Activated CD4-positive, alpha-beta T cell treated with anti-CD3 and anti-CD28 coated beads for 36 hours (primary cell): ENCODE measurements at regions of chr20 and their contacts with region 1.

Region 1: GRCh38 chr20:62386383-62387218 is at the start of gene RPS21:
- DNase-seq: peak; percentile 97
- ATAC-seq: peak; percentile 91
- H3K4me3 Mint-ChIP-seq: peak within 1 kb of the TSS; percentile 93
- H3K27ac Mint-ChIP-seq: peak within 1 kb of the TSS; percentile 94
- H3K4me1 Mint-ChIP-seq: peaks cover 42% of the 10 kb centered on the region
- H3K27me3 Mint-ChIP-seq: no peaks in the 10 kb centered on the region
- total RNA-seq, gene RPS21: 1,051 to 2,439 TPM

Region 2: DNA sequence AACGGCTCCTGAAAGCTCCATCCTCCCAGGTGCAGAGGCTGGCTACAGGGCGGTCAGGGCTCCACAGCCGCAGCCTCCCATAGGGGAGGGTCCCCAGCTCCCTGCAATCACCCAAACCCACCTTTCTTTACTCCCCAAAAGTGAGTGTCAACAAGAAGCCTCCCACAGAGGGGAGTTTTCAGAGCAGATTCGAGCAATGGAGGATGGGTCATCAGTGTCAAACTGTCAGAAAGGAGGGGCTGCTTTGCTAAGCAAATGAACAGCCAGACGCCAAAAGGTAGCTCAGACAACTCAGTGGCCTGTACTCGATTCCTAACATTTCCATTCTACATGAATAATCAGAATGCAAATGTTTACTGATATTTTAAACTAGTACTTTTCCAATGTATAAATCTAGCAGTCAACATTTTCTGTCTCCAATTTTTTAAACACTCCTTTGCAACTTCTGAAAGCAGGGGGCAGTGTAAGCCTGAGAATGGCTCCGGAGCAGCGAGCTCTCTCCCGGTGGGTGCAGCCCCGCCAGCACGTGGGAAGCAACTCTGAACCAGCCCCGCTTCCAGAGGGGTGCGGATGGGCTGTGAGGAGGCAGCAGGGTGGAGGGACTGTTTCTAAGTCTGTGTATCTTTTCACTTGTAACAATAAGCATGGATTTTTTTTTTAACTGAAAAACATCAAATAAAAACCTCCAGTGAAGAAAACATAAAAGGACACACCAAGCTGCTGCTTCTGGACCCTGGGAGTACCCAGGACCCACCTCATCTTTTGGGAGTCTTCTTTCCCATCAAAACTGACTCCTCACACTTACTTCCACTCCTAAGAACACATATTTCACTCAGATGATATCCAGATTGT is 375.8 kb before region 1 on chr20:
- CTCF ChIA-PET with region 1: interaction called, 3 read pairs
- POLR2A ChIA-PET with region 1: no interaction called
- intact Hi-C with region 1: loop called in 1 of 2 experiments (anchors 2 kb)
- DNase-seq: peak; percentile 75
- ATAC-seq: peak; percentile 81
- H3K4me3 Mint-ChIP-seq: no peak overlapping the region
- H3K27ac Mint-ChIP-seq: peak overlapping the region; percentile 29
- H3K4me1 Mint-ChIP-seq: peaks cover 3% of the 10 kb centered on the region
- H3K27me3 Mint-ChIP-seq: no peaks in the 10 kb centered on the region

Region 3: GRCh38 chr20:62143118-62143973 is 243.3 kb before region 1 on chr20 and contains the starts of genes PSMA7 and SS18L1:
- CTCF ChIA-PET with region 1: no interaction called
- POLR2A ChIA-PET with region 1: no interaction called
- intact Hi-C with region 1: loop called in 1 of 2 experiments (anchors 2 kb)
- DNase-seq: peak; percentile 92
- ATAC-seq: peak; percentile 87
- H3K4me3 Mint-ChIP-seq: peak within 1 kb of the TSS; percentile 89
- H3K27ac Mint-ChIP-seq: peak within 1 kb of the TSS; percentile 91
- H3K4me1 Mint-ChIP-seq: peaks cover 61% of the 10 kb centered on the region
- H3K27me3 Mint-ChIP-seq: no peaks in the 10 kb centered on the region
- total RNA-seq, gene PSMA7: 208 to 296 TPM
- total RNA-seq, gene SS18L1: 14.3 to 16.6 TPM

Region 4: GRCh38 chr20:62321521-62321948 is 65.1 kb before region 1 on chr20:
- CTCF ChIA-PET with region 1: no interaction called
- POLR2A ChIA-PET with region 1: no interaction called
- intact Hi-C with region 1: no loop called
- DNase-seq: peak; percentile 58
- ATAC-seq: peak; percentile 49
- H3K4me3 Mint-ChIP-seq: no peak overlapping the region
- H3K27ac Mint-ChIP-seq: peak overlapping the region; percentile 42
- H3K4me1 Mint-ChIP-seq: no peaks in the 10 kb centered on the region
- H3K27me3 Mint-ChIP-seq: no peaks in the 10 kb centered on the region

Region 5: DNA sequence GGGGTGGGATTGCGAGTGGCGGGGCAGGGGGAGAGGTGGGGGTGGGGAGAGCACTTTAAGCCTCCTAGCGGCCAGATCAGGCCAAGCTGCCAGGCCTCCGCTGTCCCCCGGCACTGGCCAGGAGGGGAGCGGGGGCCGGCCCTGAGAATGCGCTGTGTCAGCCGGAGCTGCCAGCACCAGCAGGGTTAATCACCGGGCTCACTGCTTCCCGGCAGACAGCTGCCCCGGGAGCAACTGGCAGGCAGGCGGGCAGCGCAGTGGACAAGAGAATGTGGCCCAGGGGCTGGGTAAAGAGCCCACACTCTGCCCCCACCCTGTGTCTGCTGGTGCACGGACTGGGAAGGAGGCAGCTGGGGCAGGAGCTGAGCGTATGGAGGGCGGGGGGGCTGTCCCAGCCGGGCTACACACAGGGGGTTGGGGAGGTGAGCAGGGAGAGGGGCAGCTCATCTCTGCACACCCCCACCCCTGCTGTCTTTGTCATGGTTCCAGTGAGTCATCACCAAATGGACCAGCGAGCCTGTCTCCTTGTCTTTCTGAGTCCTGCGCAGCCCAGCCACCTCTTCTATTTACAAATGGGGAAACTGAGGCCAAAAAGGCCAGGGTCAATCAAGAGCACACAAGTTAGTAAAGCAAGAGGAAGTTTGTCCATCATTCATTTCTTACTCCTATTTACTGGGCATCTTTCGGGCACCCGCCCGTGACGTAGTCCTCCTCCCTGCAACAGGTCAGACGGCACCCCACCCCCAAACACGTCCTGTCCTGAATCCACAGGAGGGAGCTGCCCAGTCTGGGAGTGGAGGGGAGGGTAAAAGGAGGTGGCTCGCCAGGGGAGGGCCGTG is 17.4 kb before region 1 on chr20:
- CTCF ChIA-PET with region 1: interaction called, 12 read pairs
- POLR2A ChIA-PET with region 1: interaction called, 3 read pairs
- intact Hi-C with region 1: no loop called
- DNase-seq: peak; percentile 37
- ATAC-seq: peak; percentile 9
- H3K4me3 Mint-ChIP-seq: no peak overlapping the region
- H3K27ac Mint-ChIP-seq: no peak overlapping the region
- H3K4me1 Mint-ChIP-seq: peaks cover 3% of the 10 kb centered on the region
- H3K27me3 Mint-ChIP-seq: peaks cover 19% of the 10 kb centered on the region

Region 6: DNA sequence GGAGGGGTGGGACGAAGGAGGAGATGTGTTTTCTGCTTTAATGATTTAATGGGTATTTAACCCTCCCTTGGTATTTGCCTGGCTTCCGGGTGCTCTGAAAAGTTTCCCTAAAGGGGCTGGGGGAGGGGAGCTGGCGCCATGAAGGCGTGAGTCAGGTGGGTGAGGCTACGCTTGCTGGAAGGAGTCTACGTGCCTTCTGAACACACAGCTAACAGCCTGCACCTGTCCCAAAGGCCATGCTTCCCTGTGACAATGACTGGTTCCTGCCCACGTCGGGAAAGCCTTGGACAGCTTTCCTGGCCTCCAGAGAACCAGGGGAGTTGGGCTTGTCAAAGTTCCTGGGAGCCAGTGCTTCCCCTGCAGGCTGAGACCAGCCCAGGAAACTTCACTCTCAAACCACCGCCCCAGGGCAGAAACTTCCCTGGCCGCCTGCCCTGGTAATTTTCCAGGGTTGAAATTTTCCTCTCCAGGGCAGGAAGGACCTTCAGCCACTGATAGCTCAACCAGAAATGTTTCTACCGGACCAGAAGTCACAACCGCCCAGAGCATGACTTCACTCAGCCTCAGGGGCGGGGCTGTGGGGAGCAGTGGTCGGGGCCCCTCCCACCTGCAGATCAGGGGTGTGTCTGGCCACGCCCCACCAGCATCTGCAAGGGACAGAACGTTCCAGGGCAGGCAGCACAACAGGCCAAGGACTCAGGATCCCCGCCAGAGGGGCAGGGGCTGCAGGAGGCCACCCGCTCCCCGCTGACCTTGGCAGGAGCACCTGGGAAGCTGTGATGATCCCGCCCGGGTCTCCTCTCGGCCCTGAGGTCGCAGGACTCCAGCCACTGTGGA is 237.1 kb after region 1 on chr20:
- CTCF ChIA-PET with region 1: no interaction called
- POLR2A ChIA-PET with region 1: no interaction called
- intact Hi-C with region 1: loop called in 1 of 2 experiments (anchors 5 kb)
- DNase-seq: peak; percentile 97
- ATAC-seq: peak; percentile 91
- H3K4me3 Mint-ChIP-seq: peak overlapping the region; percentile 69
- H3K27ac Mint-ChIP-seq: peak overlapping the region; percentile 96
- H3K4me1 Mint-ChIP-seq: peaks cover 26% of the 10 kb centered on the region
- H3K27me3 Mint-ChIP-seq: no peaks in the 10 kb centered on the region

Region 7: GRCh38 chr20:63216041-63216848 is 829.6 kb after region 1 on chr20 and contains the start of gene YTHDF1:
- CTCF ChIA-PET with region 1: no interaction called
- POLR2A ChIA-PET with region 1: no interaction called
- intact Hi-C with region 1: loop called in 1 of 2 experiments (anchors 5 kb)
- DNase-seq: peak; percentile 98
- ATAC-seq: peak; percentile 98
- H3K4me3 Mint-ChIP-seq: peak within 1 kb of the TSS; percentile 92
- H3K27ac Mint-ChIP-seq: peak within 1 kb of the TSS; percentile 88
- H3K4me1 Mint-ChIP-seq: peaks cover 43% of the 10 kb centered on the region
- H3K27me3 Mint-ChIP-seq: peaks cover 4% of the 10 kb centered on the region
- total RNA-seq, gene YTHDF1: 32.2 to 32.6 TPM